ENCODE measurements at regions of chr2 and their contacts with region 1.

Region 1: GRCh38 chr2:219155054-219155644 is 5.5 kb downstream of the NHEJ1 start:
- DNase-seq: peak; percentile 73
- ATAC-seq: peak; percentile 52; the same call in 1 of the 2 replicates
- H3K4me3 ChIP-seq: no peak overlapping the region
- H3K27ac ChIP-seq: no peak overlapping the region
- H3K4me1 ChIP-seq: peaks cover 3% of the 10 kb centered on the region; the same call in 1 of the 2 replicates
- H3K27me3 ChIP-seq: no peaks in the 10 kb centered on the region
- CTCF ChIP-seq: peak; percentile 71
- POLR2A ChIP-seq: no peak
- RAD21 ChIP-seq: peak; percentile 78

Region 2: GRCh38 chr2:218995972-218996711 is 159.0 kb before region 1 on chr2:
- CTCF ChIA-PET with region 1: interaction called, 8 read pairs
- POLR2A ChIA-PET with region 1: no interaction called
- dilution Hi-C with region 1: no loop called
- in situ Hi-C with region 1: no loop called
- intact Hi-C with region 1: loop called (anchors 1 kb)
- DNase-seq: peak; percentile 77
- ATAC-seq: peak; percentile 92
- H3K4me3 ChIP-seq: peak overlapping the region; percentile 39
- H3K27ac ChIP-seq: no peak overlapping the region
- H3K4me1 ChIP-seq: no peaks in the 10 kb centered on the region; the same call in 1 of the 2 replicates
- H3K27me3 ChIP-seq: peaks cover 85% of the 10 kb centered on the region
- CTCF ChIP-seq: peak; percentile 85
- POLR2A ChIP-seq: 0 out of 2 replicates have a peak, but pooled peaks have one; percentile 64
- RAD21 ChIP-seq: peak; percentile 75

Region 3: GRCh38 chr2:219029829-219030165 is 125.4 kb before region 1 on chr2:
- CTCF ChIA-PET with region 1: interaction called, 17 read pairs
- POLR2A ChIA-PET with region 1: no interaction called
- dilution Hi-C with region 1: no loop called
- in situ Hi-C with region 1: loop called (anchors 5 kb)
- intact Hi-C with region 1: loop called (anchors 1 kb)
- DNase-seq: peak; percentile 63
- ATAC-seq: peak; percentile 100
- H3K4me3 ChIP-seq: no peak overlapping the region
- H3K27ac ChIP-seq: no peak overlapping the region
- H3K4me1 ChIP-seq: no peaks in the 10 kb centered on the region
- H3K27me3 ChIP-seq: peaks cover 48% of the 10 kb centered on the region
- CTCF ChIP-seq: peak; percentile 91
- POLR2A ChIP-seq: no peak
- RAD21 ChIP-seq: peak; percentile 87

Region 4: DNA sequence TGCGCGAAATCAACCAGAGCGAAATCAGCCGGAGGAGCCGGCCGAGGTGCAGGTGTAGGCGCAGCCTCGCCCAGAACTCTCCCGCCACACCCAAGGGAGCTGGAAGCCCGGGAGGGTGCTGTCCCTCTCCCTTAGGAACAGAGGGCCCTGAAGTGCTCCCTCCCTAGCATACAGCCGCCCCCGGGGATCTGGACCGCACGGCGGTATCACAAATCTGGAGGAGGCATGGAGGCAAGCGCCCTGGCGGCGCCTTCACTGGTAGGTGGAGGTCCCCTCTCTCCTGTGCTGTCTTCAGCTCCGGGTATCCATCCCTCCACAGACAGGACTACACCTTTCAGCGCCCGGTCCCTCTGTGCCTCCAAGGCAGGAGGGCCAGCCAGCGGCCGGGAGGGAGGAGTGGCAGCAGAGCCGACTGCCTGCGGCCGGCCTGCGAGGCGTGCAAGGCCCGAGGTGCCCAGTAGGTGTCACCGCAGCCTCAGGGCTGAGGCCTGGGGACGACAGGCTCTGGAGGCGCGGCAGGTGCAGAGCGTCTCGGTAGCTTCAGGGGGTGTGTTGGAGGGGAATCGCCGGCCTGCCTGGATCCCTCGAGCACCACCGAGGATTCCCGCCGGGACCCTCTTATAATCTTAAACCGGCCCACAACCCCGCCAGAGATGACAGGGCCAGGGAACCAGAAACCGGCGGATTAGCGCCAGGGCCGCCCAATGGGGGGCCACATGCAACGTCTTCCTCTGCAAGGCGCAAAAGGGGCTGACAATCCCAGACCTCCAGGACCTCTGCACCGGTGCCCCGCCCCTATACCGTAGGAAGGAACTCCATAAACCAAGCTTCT is 97.2 kb before region 1 on chr2:
- CTCF ChIA-PET with region 1: interaction called, 12 read pairs
- POLR2A ChIA-PET with region 1: no interaction called
- dilution Hi-C with region 1: no loop called
- in situ Hi-C with region 1: loop called (anchors 5 kb)
- intact Hi-C with region 1: loop called (anchors 1 kb)
- DNase-seq: peak; percentile 56
- ATAC-seq: peak; percentile 97
- H3K4me3 ChIP-seq: no peak overlapping the region
- H3K27ac ChIP-seq: no peak overlapping the region
- H3K4me1 ChIP-seq: peaks cover 6% of the 10 kb centered on the region; the same call in 1 of the 2 replicates
- H3K27me3 ChIP-seq: peaks cover 91% of the 10 kb centered on the region
- CTCF ChIP-seq: peak; percentile 93
- POLR2A ChIP-seq: no peak
- RAD21 ChIP-seq: peak; percentile 96

Region 5: GRCh38 chr2:219073413-219074129 is 81.6 kb before region 1 on chr2:
- CTCF ChIA-PET with region 1: interaction called, 4 read pairs
- POLR2A ChIA-PET with region 1: no interaction called
- dilution Hi-C with region 1: no loop called
- in situ Hi-C with region 1: no loop called
- intact Hi-C with region 1: loop called (anchors 1 kb)
- DNase-seq: peak; percentile 72
- ATAC-seq: peak; percentile 81
- H3K4me3 ChIP-seq: no peak overlapping the region
- H3K27ac ChIP-seq: no peak overlapping the region
- H3K4me1 ChIP-seq: no peaks in the 10 kb centered on the region
- H3K27me3 ChIP-seq: no peaks in the 10 kb centered on the region
- CTCF ChIP-seq: peak; percentile 72
- POLR2A ChIP-seq: no peak
- RAD21 ChIP-seq: peak; percentile 67

Region 6: DNA sequence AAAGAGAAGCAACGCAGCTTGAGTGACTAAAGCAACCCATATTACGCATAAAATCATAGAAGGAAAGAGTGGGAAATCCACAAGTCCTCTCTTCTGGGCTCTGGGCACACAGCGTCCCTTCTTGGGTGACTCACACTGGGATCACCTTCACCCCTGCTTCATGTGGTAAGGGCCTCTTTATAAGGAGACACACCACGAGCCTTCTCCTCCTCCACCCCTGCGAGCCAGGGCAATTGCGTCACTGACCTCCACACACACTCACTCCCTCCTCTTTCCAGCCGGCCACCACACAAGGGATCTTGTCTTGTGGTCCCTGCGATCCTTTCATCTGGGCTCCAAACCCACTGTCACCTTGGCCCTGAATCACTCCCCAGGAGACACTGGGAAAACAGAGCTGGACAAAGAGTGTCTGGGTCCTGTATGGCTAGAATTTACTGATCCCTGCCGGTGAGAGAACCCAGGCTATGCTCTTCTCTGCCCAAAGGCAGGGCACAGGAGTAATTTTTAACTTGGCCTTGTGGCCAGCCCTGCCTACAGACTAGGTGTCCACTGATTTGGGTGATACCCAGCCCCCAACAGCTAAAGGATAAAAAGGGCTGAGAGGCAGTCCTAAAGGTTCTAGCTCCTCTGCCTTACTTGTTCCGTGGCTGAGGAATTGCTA is 29.8 kb before region 1 on chr2:
- CTCF ChIA-PET with region 1: interaction called, 4 read pairs
- POLR2A ChIA-PET with region 1: no interaction called
- dilution Hi-C with region 1: no loop called
- in situ Hi-C with region 1: no loop called
- intact Hi-C with region 1: loop called (anchors 2 kb)
- DNase-seq: peak; percentile 88
- ATAC-seq: peak; percentile 83
- H3K4me3 ChIP-seq: no peak overlapping the region
- H3K27ac ChIP-seq: no peak overlapping the region
- H3K4me1 ChIP-seq: peaks cover 12% of the 10 kb centered on the region
- H3K27me3 ChIP-seq: no peaks in the 10 kb centered on the region
- CTCF ChIP-seq: no peak
- POLR2A ChIP-seq: no peak
- RAD21 ChIP-seq: no peak

Region 7: DNA sequence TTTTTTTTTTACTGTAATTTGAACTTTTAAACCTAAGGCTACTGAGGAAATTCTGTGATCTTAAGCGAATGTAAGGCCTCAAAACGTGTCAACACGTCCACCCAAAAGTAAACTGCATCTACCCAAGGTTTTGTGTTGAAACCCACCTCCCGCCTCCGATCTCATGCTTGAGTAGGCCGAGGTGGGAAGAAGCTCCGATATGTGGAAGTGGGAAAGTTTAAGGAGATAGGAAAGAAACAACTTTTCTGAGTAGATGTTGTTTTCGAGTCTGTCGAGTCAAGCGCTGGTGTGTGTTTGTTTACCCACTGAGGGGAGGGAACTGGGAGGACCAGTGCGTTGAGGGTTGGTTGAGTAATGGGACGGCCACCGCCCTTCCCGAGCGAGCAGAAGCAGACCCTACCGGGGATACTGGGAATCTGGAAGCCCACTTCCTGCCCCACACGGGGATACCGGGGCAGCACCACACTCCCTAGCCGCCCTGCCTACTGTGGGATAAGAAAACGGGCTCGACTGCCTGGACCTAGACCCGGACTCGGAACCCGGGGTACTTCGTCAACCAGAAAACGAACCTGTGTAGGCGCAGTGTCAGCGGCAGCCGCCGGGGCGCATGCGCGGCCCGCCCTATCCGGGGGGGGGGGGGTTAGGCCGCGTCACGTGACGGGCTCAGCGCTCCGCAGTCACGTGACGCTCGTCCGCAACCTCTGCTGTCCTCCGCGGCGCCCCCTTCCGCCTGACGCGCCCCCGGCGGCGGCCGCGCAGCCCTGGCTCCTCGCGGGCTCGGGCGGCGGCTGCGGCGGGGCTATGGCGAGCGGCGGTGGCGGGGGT is 22.6 kb after region 1 on chr2 and contains the start of gene RETREG2:
- CTCF ChIA-PET with region 1: no interaction called
- POLR2A ChIA-PET with region 1: no interaction called
- dilution Hi-C with region 1: no loop called
- in situ Hi-C with region 1: no loop called
- intact Hi-C with region 1: no loop called
- DNase-seq: peak; percentile 89
- ATAC-seq: peak; percentile 73
- H3K4me3 ChIP-seq: peak within 1 kb of the TSS; percentile 64
- H3K27ac ChIP-seq: peak within 1 kb of the TSS; percentile 96
- H3K4me1 ChIP-seq: 0 out of 2 replicates have a peak, but pooled peaks cover 6% of the 10 kb centered on the region
- H3K27me3 ChIP-seq: no peaks in the 10 kb centered on the region
- CTCF ChIP-seq: peak; percentile 56
- POLR2A ChIP-seq: peak; percentile 89
- RAD21 ChIP-seq: 0 out of 2 replicates have a peak, but pooled peaks have one; percentile 4
- total RNA-seq, gene RETREG2: 39.2 and 51.1 TPM in 2 replicates

Measured in IMR-90 (cell line).